Endothelial cell of umbilical vein (primary cell): ENCODE measurements at regions of chr6 and their contacts with region 1.

Region 1: DNA sequence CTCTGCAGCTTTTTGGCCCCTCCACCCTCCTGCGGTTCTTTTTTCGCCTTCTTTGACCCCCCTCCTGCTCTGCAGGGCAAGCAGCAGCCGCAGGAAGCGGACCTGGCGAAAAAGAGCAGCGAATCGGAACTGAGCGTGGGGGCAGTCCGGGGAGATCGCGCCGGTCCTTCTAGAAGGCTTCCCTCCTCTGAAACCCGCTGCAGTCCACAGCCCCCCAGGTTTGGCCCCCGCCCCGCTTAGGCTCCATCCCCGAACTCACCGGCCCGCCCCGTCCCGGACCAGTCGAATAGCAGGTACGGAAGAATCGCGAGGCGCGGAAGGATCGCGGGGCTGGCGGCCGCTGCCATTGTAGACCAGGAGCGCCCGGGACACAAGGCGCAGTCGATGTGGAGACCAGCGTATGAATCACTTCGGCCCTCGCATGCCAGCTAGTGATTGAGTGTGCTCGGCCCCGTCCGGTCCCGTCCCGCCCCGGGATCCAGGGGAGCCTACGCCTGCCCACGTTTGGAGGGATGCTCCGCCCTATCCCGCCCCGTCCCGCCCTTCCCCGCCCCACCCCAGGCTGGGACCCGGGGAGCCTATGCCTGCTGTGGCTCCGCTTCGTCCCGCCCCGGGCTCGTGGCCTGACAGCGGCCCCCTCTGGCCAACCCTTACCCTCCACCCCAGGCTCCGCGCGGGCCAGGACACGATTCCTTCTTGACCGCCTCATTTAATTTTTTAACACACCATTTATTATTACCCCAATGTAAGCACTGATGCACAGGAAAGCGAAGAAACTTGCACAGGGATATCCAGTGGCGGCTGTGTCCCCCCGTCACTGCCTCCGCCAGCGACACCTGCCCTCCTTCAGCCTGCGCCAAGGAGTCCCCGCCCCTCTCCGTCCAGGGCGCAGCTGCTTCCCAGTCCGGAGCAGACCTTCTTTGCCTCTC is at the start of gene ULBP3:
- DNase-seq: peak; percentile 97
- H3K4me3 ChIP-seq: peak within 1 kb of the TSS; percentile 72 to 88 (median 85)
- H3K27ac ChIP-seq: peak within 1 kb of the TSS; percentile 54
- H3K4me1 ChIP-seq: peaks cover 4% of the 10 kb centered on the region
- H3K27me3 ChIP-seq: peaks cover 0 to under 1% of the 10 kb centered on the region in 2 experiments
- CTCF ChIP-seq: peak; percentile 42 to 75
- POLR2A ChIP-seq: peak; percentile 92
- total RNA-seq, gene ULBP3: 12.8 and 13.8 TPM in 2 replicates

Region 2: GRCh38 chr6:149565527-149566409 is 503.2 kb before region 1 on chr6 and contains the start of gene GINM1:
- CTCF ChIA-PET with region 1: no interaction called
- POLR2A ChIA-PET with region 1: no interaction called
- dilution Hi-C with region 1: no loop called
- intact Hi-C with region 1: loop called (anchors 1 kb)
- DNase-seq: peak; percentile 97
- H3K4me3 ChIP-seq: peak within 1 kb of the TSS; percentile 75 to 93 (median 85)
- H3K27ac ChIP-seq: peak within 1 kb of the TSS; percentile 82
- H3K4me1 ChIP-seq: peaks cover 16% of the 10 kb centered on the region
- H3K27me3 ChIP-seq: no peaks in the 10 kb centered on the region
- CTCF ChIP-seq: peak; percentile 52 to 71
- POLR2A ChIP-seq: no peak
- total RNA-seq, gene GINM1: 38.0 and 38.2 TPM in 2 replicates

Region 3: GRCh38 chr6:150004783-150005717 is 63.9 kb before region 1 on chr6:
- CTCF ChIA-PET with region 1: no interaction called
- POLR2A ChIA-PET with region 1: no interaction called
- dilution Hi-C with region 1: no loop called
- intact Hi-C with region 1: loop called (anchors 1 kb)
- DNase-seq: peak; percentile 89
- H3K4me3 ChIP-seq: peak overlapping the region; percentile 28 to 82 (median 50)
- H3K27ac ChIP-seq: no peak overlapping the region
- H3K4me1 ChIP-seq: peaks cover 2% of the 10 kb centered on the region
- H3K27me3 ChIP-seq: peaks cover 8 to 13% of the 10 kb centered on the region in 2 experiments
- CTCF ChIP-seq: peak in 1 of 2 donors; percentile 32
- POLR2A ChIP-seq: peak; percentile 39

Region 4: DNA sequence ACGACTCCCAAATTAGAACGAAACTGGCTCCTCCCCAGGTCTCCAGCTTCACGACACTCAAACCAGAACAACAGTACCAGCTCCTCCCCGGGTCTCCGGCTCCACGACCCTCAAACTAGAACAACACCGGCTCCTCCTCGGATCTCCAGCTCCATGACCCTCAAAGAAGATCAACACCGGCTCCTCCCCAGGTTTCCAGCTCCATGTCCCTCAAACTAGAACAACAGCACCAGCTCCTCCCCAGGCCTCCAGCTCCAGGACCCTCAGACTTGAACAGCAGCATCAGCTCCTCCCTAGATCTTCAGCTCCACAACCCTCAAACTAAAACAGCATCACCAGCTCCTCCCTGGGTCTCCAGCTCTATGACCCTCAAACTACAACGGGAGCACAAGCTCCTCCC is 13.9 kb before region 1 on chr6:
- CTCF ChIA-PET with region 1: interaction called, 10 read pairs
- POLR2A ChIA-PET with region 1: no interaction called
- dilution Hi-C with region 1: no loop called
- intact Hi-C with region 1: no loop called
- DNase-seq: no peak
- H3K4me3 ChIP-seq: no peak overlapping the region
- H3K27ac ChIP-seq: no peak overlapping the region
- H3K4me1 ChIP-seq: no peaks in the 10 kb centered on the region
- H3K27me3 ChIP-seq: peaks cover 6 to 13% of the 10 kb centered on the region in 2 experiments
- CTCF ChIP-seq: no peak
- POLR2A ChIP-seq: no peak

Region 5: DNA sequence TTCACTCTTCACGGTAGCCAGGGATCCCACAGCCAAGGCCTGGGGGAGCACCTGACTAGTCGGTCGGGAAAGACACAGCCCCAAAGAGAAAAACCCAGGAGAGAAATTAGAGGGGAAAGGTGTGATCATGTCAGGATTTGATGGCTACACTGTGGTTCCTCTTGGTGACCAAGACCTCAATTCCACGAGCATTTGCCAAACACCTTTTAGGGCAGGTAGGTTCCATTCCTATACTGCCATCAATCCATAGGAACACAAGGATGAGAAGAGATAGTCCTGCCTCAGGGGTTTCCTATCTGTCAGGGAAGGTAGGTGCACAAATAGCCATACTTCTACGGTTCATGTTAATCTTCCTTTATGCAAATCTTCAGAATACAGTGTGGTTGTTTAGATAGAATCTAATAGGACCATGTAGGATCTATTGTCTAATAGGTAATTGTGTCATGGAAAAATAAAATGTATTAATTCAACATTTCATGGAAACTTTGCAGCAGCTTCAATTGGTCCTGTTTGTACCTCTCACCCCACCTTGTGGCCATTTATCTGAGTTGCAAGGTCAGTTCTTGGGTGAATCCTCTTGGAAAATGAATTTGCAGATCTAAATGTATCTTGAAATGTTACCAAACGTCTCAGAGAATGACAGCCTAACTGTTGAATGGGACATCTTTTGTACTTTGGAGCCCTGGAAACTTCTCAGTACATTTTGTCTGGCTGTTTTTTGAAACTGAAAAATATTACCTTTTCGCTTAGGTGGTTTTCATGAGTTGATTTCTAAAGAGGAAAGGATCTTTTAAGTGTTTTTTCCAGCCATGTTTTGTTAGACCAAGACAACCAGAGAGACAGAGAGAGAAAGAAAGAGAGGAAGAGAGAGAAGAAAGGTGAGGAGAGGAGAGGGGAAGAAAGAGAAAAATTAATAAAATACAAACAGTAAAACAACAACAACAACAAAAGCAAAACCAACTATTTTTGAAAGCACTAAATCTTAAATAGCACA is 266.1 kb after region 1 on chr6:
- CTCF ChIA-PET with region 1: interaction called, 42 read pairs
- POLR2A ChIA-PET with region 1: no interaction called
- dilution Hi-C with region 1: no loop called
- intact Hi-C with region 1: loop called (anchors 1 kb)
- DNase-seq: peak; percentile 65
- H3K4me3 ChIP-seq: no peak overlapping the region
- H3K27ac ChIP-seq: no peak overlapping the region
- H3K4me1 ChIP-seq: no peaks in the 10 kb centered on the region
- H3K27me3 ChIP-seq: peaks cover 3 to 12% of the 10 kb centered on the region in 2 experiments
- CTCF ChIP-seq: peak; percentile 61 to 62
- POLR2A ChIP-seq: no peak